Vagina (tissue), 2 donors: ENCODE measurements at regions of chr18 and their contacts with region 1.

Region 1: GRCh38 chr18:74013955-74014354 is 133.7 kb downstream of the FBXO15 start:
- DNase-seq: no peak
- H3K4me3 ChIP-seq: no peak overlapping the region
- H3K27ac ChIP-seq: no peak overlapping the region
- H3K4me1 ChIP-seq: no peaks in the 10 kb centered on the region
- H3K27me3 ChIP-seq: no peaks in the 10 kb centered on the region
- CTCF ChIP-seq: no peak
- POLR2A ChIP-seq: no peak

Region 2: GRCh38 chr18:73807551-73808192 is 206.3 kb before region 1 on chr18:
- intact Hi-C with region 1: no loop called
- DNase-seq: no peak
- H3K4me3 ChIP-seq: no peak overlapping the region
- H3K27ac ChIP-seq: no peak overlapping the region
- H3K4me1 ChIP-seq: peaks cover 12% of the 10 kb centered on the region
- H3K27me3 ChIP-seq: no peaks in the 10 kb centered on the region
- CTCF ChIP-seq: no peak
- POLR2A ChIP-seq: no peak

Region 3: GRCh38 chr18:73962256-73962655 is 51.7 kb before region 1 on chr18:
- intact Hi-C with region 1: no loop called
- DNase-seq: no peak
- H3K4me3 ChIP-seq: no peak overlapping the region
- H3K27ac ChIP-seq: no peak overlapping the region
- H3K4me1 ChIP-seq: no peaks in the 10 kb centered on the region
- H3K27me3 ChIP-seq: no peaks in the 10 kb centered on the region
- CTCF ChIP-seq: no peak
- POLR2A ChIP-seq: no peak

Region 4: GRCh38 chr18:74370115-74370514 is 356.2 kb after region 1 on chr18:
- intact Hi-C with region 1: loop called (anchors 5 kb)
- DNase-seq: no peak
- H3K4me3 ChIP-seq: no peak overlapping the region
- H3K27ac ChIP-seq: peak overlapping the region; percentile 50
- H3K4me1 ChIP-seq: peaks cover 14% of the 10 kb centered on the region
- H3K27me3 ChIP-seq: no peaks in the 10 kb centered on the region
- CTCF ChIP-seq: no peak
- POLR2A ChIP-seq: no peak